OCI-LY7 (cell line): ENCODE measurements at regions of chr1 and their contacts with region 1.

Region 1: GRCh38 chr1:114346480-114347029 is 164.4 kb downstream of the TRIM33 start:
- DNase-seq: peak; percentile 93
- H3K4me3 ChIP-seq: peak overlapping the region; percentile 46
- H3K27ac ChIP-seq: no peak overlapping the region
- H3K4me1 ChIP-seq: peaks cover 5% of the 10 kb centered on the region
- CTCF ChIP-seq: peak; percentile 100

Region 2: GRCh38 chr1:114330451-114330983 is 16.0 kb before region 1 on chr1:
- CTCF ChIA-PET with region 1: no interaction called
- POLR2A ChIA-PET with region 1: no interaction called
- intact Hi-C with region 1: no loop called
- DNase-seq: no peak
- H3K4me3 ChIP-seq: no peak overlapping the region
- H3K27ac ChIP-seq: no peak overlapping the region
- H3K4me1 ChIP-seq: no peaks in the 10 kb centered on the region
- CTCF ChIP-seq: no peak

Region 3: GRCh38 chr1:114670083-114671010 is 323.8 kb after region 1 on chr1:
- CTCF ChIA-PET with region 1: no interaction called
- POLR2A ChIA-PET with region 1: no interaction called
- intact Hi-C with region 1: loop called (anchors 2 kb)
- DNase-seq: peak; percentile 86
- H3K4me3 ChIP-seq: peak overlapping the region; percentile 72
- H3K27ac ChIP-seq: no peak overlapping the region
- H3K4me1 ChIP-seq: peaks cover 4% of the 10 kb centered on the region
- CTCF ChIP-seq: no peak